Ascending aorta (tissue), 2 donors: ENCODE measurements at regions of chr1 and their contacts with region 1.

Region 1: GRCh38 chr1:116504308-116505156 is 66.3 kb downstream of the CD58 start:
- DNase-seq: peak; percentile 75 to 85
- H3K4me3 ChIP-seq: no peak overlapping the region
- H3K27ac ChIP-seq: peak overlapping the region; percentile 29 to 43
- H3K4me1 ChIP-seq: peaks cover 6 to 11% of the 10 kb centered on the region in 2 donors
- H3K27me3 ChIP-seq: no peaks in the 10 kb centered on the region
- CTCF ChIP-seq: no peak

Region 2: GRCh38 chr1:116377541-116378529 is 126.7 kb before region 1 on chr1:
- intact Hi-C with region 1: loop called (anchors 2 kb)
- DNase-seq: peak in 1 of 2 donors; percentile 75
- H3K4me3 ChIP-seq: peak overlapping the region; percentile 78 to 81
- H3K27ac ChIP-seq: peak overlapping the region; percentile 95 to 96
- H3K4me1 ChIP-seq: peaks cover 27 to 71% of the 10 kb centered on the region in 2 donors
- H3K27me3 ChIP-seq: no peaks in the 10 kb centered on the region
- CTCF ChIP-seq: no peak

Region 3: DNA sequence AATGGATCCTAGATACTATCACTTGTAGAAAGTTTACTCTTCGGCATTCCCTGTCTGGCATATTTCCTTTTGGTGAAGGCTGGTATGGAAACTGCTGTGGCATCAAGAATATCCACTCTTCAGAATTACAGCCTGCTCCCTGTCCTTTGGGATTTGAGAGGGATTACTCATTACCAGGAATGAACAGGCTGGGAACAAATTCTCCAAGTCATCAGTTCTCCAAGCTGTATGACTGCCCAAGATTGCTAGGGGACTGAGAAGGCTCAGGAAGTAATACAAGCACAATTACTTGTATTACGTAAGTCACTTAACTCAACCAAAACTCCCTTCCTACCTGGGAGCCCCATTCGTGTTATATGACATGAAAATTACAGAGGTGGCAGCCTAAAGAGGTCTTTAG is 16.7 kb after region 1 on chr1:
- intact Hi-C with region 1: loop called (anchors 1 kb)
- DNase-seq: no peak
- H3K4me3 ChIP-seq: no peak overlapping the region
- H3K27ac ChIP-seq: peak overlapping the region; percentile 21 to 55
- H3K4me1 ChIP-seq: peaks cover 0 to 6% of the 10 kb centered on the region in 2 donors
- H3K27me3 ChIP-seq: no peaks in the 10 kb centered on the region
- CTCF ChIP-seq: no peak

Region 4: DNA sequence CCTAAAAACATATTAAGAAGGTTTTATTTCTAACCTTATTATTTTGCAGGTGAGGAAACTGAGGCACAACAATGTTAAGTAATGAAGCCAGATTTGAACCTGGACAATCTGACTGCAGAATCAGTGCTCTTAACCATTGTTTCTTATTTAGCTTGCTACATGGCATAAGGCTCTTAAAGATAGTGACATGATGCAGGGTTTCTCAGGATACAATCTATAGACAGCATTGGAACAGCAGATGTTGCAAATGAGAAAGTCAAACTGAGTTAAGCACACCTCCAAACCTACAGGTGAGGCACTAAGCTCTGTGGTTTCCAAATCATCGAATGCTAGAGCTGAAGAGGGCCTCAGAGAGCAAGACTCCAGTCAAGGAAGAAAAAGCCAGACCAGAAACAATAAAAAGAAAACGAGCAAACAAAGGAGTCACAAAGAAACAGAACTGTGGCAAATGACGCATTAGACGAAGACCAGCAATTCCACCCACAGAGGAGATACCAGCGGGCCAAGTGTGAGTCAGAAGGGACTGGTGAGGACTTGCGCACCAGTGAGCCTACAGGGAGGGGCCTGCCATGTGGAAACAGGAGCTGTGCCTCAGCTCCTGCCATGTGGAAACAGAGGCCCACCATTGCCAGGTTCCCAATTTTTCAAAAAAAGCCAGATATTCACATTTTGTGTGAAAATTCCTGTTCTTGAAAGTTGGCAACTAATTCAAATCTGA is 51.9 kb after region 1 on chr1:
- intact Hi-C with region 1: loop called (anchors 5 kb)
- DNase-seq: peak; percentile 64 to 87
- H3K4me3 ChIP-seq: no peak overlapping the region
- H3K27ac ChIP-seq: peak overlapping the region; percentile 35 to 44
- H3K4me1 ChIP-seq: no peaks in the 10 kb centered on the region
- H3K27me3 ChIP-seq: no peaks in the 10 kb centered on the region
- CTCF ChIP-seq: no peak

Region 5: DNA sequence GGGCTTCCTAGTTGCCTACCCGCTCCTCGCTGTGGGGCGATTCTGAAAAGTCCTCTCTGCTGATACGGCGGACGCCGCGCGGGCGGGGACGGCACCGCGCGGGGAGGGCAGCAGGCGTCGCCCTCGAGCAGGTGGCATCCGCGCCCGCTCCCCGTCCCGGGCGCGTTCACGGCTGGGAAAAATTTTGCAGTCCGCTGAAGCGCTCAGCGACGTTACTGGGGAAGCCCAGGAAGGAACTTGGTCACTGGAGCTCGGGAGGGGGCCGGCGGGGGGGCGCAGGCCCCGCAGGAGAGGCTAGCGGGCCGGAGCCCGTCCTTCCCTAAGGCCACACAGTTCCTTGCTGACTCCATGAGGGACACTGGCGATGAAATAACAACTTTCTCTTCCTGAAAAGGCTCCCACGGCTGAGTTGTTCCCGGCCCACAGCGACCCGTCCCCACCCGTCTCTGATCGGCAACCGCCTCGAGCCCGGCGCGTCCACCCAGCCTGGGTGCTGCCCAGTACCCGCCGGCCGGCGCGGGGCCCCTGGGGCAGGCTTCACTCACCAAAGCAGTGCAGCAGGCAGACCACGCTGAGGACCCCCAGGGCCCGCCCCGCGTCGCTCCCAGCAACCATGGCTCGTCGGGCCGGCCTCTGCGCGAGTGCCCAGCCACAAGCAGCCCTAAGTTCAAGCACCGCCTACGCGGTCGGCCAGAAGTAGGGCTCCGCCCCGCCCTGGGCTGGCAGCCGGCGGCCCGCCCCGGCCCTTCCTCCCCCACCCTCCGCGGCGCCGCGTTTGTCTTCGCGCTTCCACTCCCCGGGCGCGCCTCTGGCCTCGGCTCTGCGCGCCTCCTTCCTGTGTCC is 66.0 kb after region 1 on chr1 and contains the start of gene CD58:
- intact Hi-C with region 1: loop called (anchors 1 kb)
- DNase-seq: peak; percentile 55 to 95
- H3K4me3 ChIP-seq: peak within 1 kb of the TSS; percentile 91 to 92
- H3K27ac ChIP-seq: peak within 1 kb of the TSS; percentile 99 to 100
- H3K4me1 ChIP-seq: peaks cover 0 to 11% of the 10 kb centered on the region in 2 donors
- H3K27me3 ChIP-seq: no peaks in the 10 kb centered on the region
- CTCF ChIP-seq: peak; percentile 73 to 81 (median 78)
- total RNA-seq, gene CD58: 50.7 TPM

Region 6: GRCh38 chr1:116605315-116605714 is 100.8 kb after region 1 on chr1:
- intact Hi-C with region 1: no loop called
- DNase-seq: no peak
- H3K4me3 ChIP-seq: no peak overlapping the region
- H3K27ac ChIP-seq: no peak overlapping the region
- H3K4me1 ChIP-seq: no peaks in the 10 kb centered on the region
- H3K27me3 ChIP-seq: no peaks in the 10 kb centered on the region
- CTCF ChIP-seq: no peak